ENCODE measurements at regions of chr20 and their contacts with region 1.

Region 1: GRCh38 chr20:54219751-54220426 is 12.0 kb downstream of the PFDN4 start:
- DNase-seq: peak; percentile 53
- H3K4me3 ChIP-seq: no peak overlapping the region; a peak in 1 of 4 replicates
- H3K27ac ChIP-seq: peak overlapping the region in 1 of 2 experiments; percentile 32; a peak in 1 of 4 replicates
- H3K4me1 ChIP-seq: peaks cover 6 to 19% of the 10 kb centered on the region in 2 experiments; a peak in 3 of 4 replicates
- H3K27me3 ChIP-seq: no peaks in the 10 kb centered on the region
- CTCF ChIP-seq: peak; percentile 83
- EP300 ChIP-seq: no peak
- RAD21 ChIP-seq: peak; percentile 75

Region 2: DNA sequence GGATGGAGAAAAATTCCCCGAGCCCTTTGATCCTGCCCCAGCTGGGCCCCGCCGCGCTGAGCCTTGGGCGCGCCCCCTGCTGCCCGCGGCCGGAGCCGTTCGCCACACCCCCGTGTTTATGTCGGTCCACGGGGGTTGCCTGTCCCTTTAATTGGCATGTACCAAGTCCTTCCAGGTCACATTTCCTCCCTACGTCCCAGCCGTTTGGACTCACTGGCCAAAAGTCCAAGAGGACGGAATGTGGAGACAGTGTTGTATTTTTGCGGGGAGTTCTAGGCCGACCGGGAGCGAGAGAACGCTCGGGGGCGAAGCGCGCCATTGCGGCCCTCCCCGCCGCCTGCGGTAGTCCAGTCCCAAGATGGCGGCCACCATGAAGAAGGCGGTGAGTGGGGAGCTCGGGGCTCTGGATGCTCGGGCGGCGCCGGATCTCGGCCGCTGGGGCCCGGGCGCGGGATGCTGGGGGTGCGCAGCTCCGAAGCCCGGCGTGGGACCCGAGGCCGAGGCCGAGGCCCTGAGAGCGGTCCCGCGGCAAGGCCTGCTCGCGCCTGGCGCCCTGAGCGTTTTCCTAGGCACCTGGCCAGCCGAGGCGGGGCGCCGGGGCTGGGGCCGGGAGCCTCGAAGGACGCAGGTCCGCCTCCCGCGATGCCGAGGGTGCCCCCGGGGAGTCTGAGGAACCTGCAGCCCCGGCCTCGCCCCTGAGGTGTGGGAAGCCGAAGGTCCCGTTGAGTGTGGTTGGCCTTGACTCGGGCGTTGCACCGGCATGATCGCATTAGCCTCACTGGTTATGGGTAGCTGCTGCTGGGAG is 11.9 kb before region 1 on chr20 and contains the start of gene PFDN4:
- CTCF ChIA-PET with region 1: interaction called, 20 read pairs
- POLR2A ChIA-PET with region 1: interaction called, 3 read pairs
- DNase-seq: peak; percentile 98
- H3K4me3 ChIP-seq: peak within 1 kb of the TSS; percentile 88 to 97
- H3K27ac ChIP-seq: peak within 1 kb of the TSS; percentile 88 to 98
- H3K4me1 ChIP-seq: peaks cover 5 to 9% of the 10 kb centered on the region in 2 experiments; a peak in 2 of 4 replicates
- H3K27me3 ChIP-seq: no peaks in the 10 kb centered on the region
- CTCF ChIP-seq: peak; percentile 83
- EP300 ChIP-seq: peak in 1 of 2 experiments; percentile 76; a peak in 1 of 4 replicates
- RAD21 ChIP-seq: peak; percentile 35
- polyA plus RNA-seq, gene PFDN4: 44.0 and 51.4 TPM in 2 replicates

Region 3: GRCh38 chr20:54345301-54345724 is 125.4 kb after region 1 on chr20:
- CTCF ChIA-PET with region 1: no interaction called
- POLR2A ChIA-PET with region 1: no interaction called
- DNase-seq: no peak
- H3K4me3 ChIP-seq: peak overlapping the region; percentile 15 to 20; a peak in 2 of 4 replicates
- H3K27ac ChIP-seq: peak overlapping the region; percentile 80 to 88
- H3K4me1 ChIP-seq: peaks cover 0 to 41% of the 10 kb centered on the region in 2 experiments; a peak in 2 of 4 replicates
- H3K27me3 ChIP-seq: no peaks in the 10 kb centered on the region
- CTCF ChIP-seq: no peak
- EP300 ChIP-seq: peak; percentile 41 to 92; a peak in 3 of 4 replicates
- RAD21 ChIP-seq: no peak

Measured in SK-N-SH (cell line).